Transverse colon (tissue), 4 donors: ENCODE measurements at regions of chr1 and their contacts with region 1.

Region 1: GRCh38 chr1:119613769-119614720 is 34.0 kb downstream of the ZNF697 start:
- DNase-seq: peak; percentile 89
- H3K4me3 ChIP-seq: no peak overlapping the region
- H3K27ac ChIP-seq: no peak overlapping the region
- H3K4me1 ChIP-seq: peaks cover 0 to 5% (median 1%) of the 10 kb centered on the region in 4 donors
- H3K27me3 ChIP-seq: no peaks in the 10 kb centered on the region
- CTCF ChIP-seq: peak; percentile 74 to 80 (median 78)
- EP300 ChIP-seq: no peak
- POLR2A ChIP-seq: no peak

Region 2: DNA sequence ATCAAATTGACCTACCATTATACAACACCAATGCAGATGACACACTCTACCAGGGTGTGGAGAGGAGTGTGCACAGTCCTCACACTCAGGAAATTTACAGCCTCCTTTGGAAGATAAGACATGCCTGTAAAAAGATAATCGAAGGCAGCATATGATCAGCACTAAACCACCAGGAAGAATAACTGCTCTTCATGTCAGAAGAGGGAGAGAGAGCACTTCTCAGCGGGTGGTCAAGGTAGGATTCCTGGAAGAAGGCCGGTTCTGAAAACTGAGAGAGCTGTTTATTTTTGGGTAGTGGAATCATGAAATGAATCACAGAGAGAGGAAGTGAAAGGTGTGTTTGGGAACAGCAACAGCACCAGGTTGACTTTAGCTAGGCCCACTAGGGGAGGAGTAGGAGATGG is 48.0 kb after region 1 on chr1:
- in situ Hi-C with region 1: loop called in 3 of 4 experiments (anchors 5 to 10 kb)
- intact Hi-C with region 1: loop called (anchors 2 kb)
- DNase-seq: peak; percentile 9
- H3K4me3 ChIP-seq: no peak overlapping the region
- H3K27ac ChIP-seq: peak overlapping the region; percentile 11 to 72 (median 32)
- H3K4me1 ChIP-seq: peaks cover 8 to 38% (median 27%) of the 10 kb centered on the region in 4 donors
- H3K27me3 ChIP-seq: no peaks in the 10 kb centered on the region
- CTCF ChIP-seq: no peak
- EP300 ChIP-seq: no peak
- POLR2A ChIP-seq: no peak

Region 3: DNA sequence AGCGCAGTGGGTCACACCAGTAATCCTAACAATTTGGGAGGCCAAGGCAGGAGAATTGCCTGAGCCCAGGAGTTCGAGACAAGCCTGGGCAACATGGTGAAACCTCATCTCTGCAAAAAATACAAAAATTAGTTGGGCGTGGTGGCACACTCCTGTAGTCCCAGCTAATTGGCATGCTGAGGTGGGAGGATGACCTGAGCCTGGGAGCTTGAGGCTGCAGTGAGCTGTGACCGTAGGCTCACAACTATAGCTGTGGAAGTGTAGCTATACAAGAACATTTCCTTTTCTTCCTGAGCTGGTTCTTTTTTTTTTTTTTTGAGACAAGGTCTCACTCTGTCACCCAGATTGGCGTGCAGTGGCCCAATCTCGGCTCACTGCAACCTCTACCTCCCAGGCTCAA is 53.1 kb after region 1 on chr1:
- in situ Hi-C with region 1: loop called in 3 of 4 experiments (anchors 5 to 10 kb)
- intact Hi-C with region 1: loop called (anchors 2 kb)
- DNase-seq: no peak
- H3K4me3 ChIP-seq: no peak overlapping the region
- H3K27ac ChIP-seq: no peak overlapping the region
- H3K4me1 ChIP-seq: peaks cover 3 to 10% (median 7%) of the 10 kb centered on the region in 4 donors
- H3K27me3 ChIP-seq: no peaks in the 10 kb centered on the region
- CTCF ChIP-seq: no peak
- EP300 ChIP-seq: no peak
- POLR2A ChIP-seq: no peak